ENCODE measurements at regions of chr1 and their contacts with region 1.

Region 1: GRCh38 chr1:156859523-156860112 is 701 bp upstream of the INSRR start:
- DNase-seq: no peak
- H3K4me3 ChIP-seq: peak overlapping the region; percentile 33
- CTCF ChIP-seq: no peak

Region 2: GRCh38 chr1:156717275-156717805 is 142.3 kb before region 1 on chr1:
- in situ Hi-C with region 1: loop called (anchors 5 kb)
- DNase-seq: no peak
- H3K4me3 ChIP-seq: no peak overlapping the region
- CTCF ChIP-seq: no peak

Region 3: DNA sequence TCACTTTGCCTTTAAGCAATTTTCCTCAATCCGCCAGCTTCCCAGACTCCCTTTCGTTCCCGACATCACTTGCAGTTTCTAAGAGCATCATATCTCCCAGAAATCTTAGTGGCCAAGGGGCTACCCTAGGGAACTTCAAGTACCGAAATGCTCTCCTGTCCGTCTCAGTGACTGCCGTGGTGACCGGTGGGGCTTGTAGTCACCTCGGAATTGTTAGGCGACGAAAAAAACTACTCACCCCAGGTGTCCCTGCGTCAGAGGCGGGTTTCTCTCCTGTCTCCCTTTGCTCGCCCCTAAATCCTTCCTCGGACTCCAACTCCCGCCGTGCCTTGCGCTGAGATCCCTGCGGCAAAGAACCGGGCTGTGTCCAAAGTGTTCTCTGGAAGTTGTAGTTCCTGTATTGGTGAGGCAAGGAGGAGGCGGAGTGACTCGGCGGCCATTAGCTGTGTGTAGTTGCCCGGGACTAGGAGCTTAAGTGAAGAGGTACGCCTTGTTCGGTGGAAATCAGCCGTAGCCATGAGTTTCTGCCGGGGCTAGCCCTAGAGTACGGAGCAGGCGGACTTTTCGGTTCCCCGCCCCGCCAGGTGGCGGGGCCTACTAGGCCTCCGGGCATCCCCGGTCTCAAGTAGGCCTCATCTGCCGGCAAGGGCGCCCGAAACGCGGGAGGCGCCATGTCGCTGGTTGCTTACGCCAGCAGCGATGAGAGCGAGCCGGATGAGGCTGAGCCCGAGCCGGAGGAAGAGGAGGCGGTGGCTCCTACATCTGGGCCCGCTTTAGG is 92.3 kb before region 1 on chr1 and contains the start of gene PRCC:
- in situ Hi-C with region 1: no loop called
- DNase-seq: peak; percentile 100
- H3K4me3 ChIP-seq: peak within 1 kb of the TSS; percentile 94
- CTCF ChIP-seq: no peak

Region 4: GRCh38 chr1:156797212-156797871 is 62.3 kb before region 1 on chr1:
- in situ Hi-C with region 1: no loop called
- DNase-seq: peak; percentile 33
- H3K4me3 ChIP-seq: no peak overlapping the region
- CTCF ChIP-seq: peak; percentile 89

Measured in astrocyte of the cerebellum (primary cell).